ENCODE measurements at regions of chr14 and their contacts with region 1.

Region 1: GRCh38 chr14:74257078-74257989 is 18.1 kb downstream of the VSX2 start:
- DNase-seq: peak; percentile 67
- H3K27ac ChIP-seq: no peak overlapping the region
- CTCF ChIP-seq: peak; percentile 97

Region 2: DNA sequence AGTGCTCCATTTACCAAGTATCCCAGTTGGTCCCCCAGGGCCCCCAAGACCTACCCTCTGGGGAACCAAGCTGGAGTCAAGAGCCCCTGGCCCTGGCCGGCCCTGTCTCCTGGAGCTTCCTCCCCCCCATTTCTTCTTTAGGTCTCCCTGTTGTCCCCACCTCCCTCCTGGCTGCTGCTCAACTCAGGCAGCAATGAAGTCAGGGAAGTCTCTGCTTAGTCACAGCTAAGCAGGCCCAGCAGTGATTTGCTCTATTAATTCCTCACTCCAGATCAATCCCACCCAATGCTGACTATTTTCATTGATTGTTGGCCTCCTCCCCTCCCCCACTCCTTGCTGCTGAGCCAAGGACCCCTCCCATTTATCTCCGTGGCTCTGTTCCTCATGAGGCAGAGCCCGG is 10.3 kb after region 1 on chr14:
- CTCF ChIA-PET with region 1: interaction called, 14 read pairs
- POLR2A ChIA-PET with region 1: no interaction called
- DNase-seq: no peak
- H3K27ac ChIP-seq: no peak overlapping the region
- CTCF ChIP-seq: no peak